Activated CD8-positive, alpha-beta T cell treated with anti-CD3 and anti-CD28 coated beads for 36 hours (primary cell): ENCODE measurements at regions of chr3 and their contacts with region 1.

Region 1: GRCh38 chr3:128845778-128846485 is 33.5 kb upstream of the ACAD9 start:
- DNase-seq: peak; percentile 94
- ATAC-seq: peak; percentile 91
- H3K4me3 Mint-ChIP-seq: peak overlapping the region; percentile 67
- H3K27ac Mint-ChIP-seq: peak overlapping the region; percentile 94
- H3K4me1 Mint-ChIP-seq: peaks cover 22% of the 10 kb centered on the region
- H3K27me3 Mint-ChIP-seq: no peaks in the 10 kb centered on the region
- CTCF ChIP-seq: peak; percentile 91

Region 2: DNA sequence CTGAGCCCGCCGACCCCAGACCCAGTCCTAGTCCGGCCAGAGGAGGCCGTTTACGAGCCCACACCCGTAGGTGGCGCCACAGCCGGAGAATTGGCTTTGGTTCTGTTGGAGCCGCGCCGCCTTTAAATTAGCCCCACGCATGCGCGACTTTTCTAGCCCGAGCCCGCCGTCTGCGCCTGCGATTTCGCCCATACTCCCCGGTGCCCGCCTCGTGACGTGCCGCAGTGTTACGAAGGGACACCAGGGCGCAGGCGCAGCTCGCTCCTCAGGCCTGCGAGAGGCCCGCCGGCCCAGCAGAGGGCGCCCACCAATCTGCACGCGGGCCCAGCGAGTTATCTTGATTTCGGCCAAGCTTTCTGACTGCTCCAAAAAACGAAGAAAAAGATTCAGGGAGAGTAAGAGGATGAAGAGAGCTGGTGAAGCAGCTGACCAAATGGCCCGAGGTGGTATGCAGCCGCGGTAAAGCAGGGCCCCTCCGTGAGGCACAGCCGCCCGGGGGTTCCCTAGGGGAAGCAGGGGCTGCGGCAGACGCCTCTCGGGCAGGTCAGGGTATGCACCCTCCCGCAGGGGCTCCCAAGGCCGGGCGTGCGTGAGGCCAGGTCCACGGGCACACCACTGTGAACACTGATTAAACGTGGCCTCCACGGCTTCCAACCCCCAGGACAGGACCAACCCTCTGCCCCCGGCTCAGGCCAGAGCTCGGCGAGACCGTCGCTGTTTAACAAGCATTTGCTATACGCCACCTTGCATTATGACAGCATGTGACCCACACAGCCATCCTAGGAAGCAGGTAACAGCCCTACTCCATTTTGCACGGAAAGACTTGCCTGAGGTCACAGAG is 228.2 kb before region 1 on chr3:
- CTCF ChIA-PET with region 1: interaction called, 16 read pairs
- POLR2A ChIA-PET with region 1: no interaction called
- intact Hi-C with region 1: no loop called
- DNase-seq: peak; percentile 99
- ATAC-seq: peak; percentile 90
- H3K4me3 Mint-ChIP-seq: peak overlapping the region; percentile 95
- H3K27ac Mint-ChIP-seq: peak overlapping the region; percentile 94
- H3K4me1 Mint-ChIP-seq: peaks cover 29% of the 10 kb centered on the region
- H3K27me3 Mint-ChIP-seq: no peaks in the 10 kb centered on the region
- CTCF ChIP-seq: peak; percentile 92

Region 3: GRCh38 chr3:128863560-128863959 is 17.6 kb after region 1 on chr3:
- CTCF ChIA-PET with region 1: interaction called, 11 read pairs
- POLR2A ChIA-PET with region 1: no interaction called
- intact Hi-C with region 1: no loop called
- DNase-seq: peak; percentile 49
- ATAC-seq: peak; percentile 61
- H3K4me3 Mint-ChIP-seq: no peak overlapping the region
- H3K27ac Mint-ChIP-seq: no peak overlapping the region
- H3K4me1 Mint-ChIP-seq: peaks cover 2% of the 10 kb centered on the region
- H3K27me3 Mint-ChIP-seq: no peaks in the 10 kb centered on the region
- CTCF ChIP-seq: peak; percentile 44

Region 4: DNA sequence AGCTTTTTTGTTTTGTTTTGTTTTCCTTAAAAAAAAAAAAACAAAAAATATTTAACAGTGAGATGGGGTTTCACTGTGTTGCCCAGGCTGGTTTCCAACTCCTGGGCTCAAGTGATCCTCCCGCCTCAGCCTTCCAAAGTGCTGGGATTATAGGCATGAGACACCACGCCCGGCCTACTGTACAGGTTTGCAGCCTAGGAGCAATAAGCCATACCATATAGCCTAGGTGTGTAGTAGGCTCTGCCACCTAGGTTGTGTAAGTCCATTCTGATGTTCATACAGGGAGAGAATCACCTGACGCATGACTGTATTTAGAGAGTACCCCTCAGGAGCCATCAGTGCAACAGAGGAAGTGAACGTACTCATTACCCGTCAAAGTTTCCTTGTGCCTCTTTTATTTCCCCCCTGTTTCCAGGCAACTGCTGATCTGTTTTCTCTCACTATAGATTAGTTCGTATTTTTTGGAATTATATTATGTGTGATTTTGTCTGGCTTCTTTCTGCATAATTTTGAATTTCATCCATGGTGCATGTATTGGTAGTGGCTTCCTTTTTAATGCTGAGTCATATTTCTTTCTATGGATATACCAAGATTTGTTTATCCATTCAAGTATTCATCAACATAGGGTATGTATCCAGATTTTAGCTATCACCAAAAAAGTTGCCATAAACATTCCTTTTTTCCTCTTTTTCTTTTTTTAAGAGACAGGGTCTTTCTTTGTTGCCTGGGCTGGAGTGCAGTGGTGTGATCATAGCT is 43.4 kb after region 1 on chr3:
- CTCF ChIA-PET with region 1: no interaction called
- POLR2A ChIA-PET with region 1: no interaction called
- intact Hi-C with region 1: no loop called
- DNase-seq: no peak
- ATAC-seq: peak; percentile 49
- H3K4me3 Mint-ChIP-seq: no peak overlapping the region
- H3K27ac Mint-ChIP-seq: peak overlapping the region; percentile 32
- H3K4me1 Mint-ChIP-seq: no peaks in the 10 kb centered on the region
- H3K27me3 Mint-ChIP-seq: no peaks in the 10 kb centered on the region
- CTCF ChIP-seq: no peak

Region 5: GRCh38 chr3:129095285-129095684 is 249.4 kb after region 1 on chr3:
- CTCF ChIA-PET with region 1: no interaction called
- POLR2A ChIA-PET with region 1: no interaction called
- intact Hi-C with region 1: no loop called
- DNase-seq: no peak
- ATAC-seq: no peak
- H3K4me3 Mint-ChIP-seq: no peak overlapping the region
- H3K27ac Mint-ChIP-seq: no peak overlapping the region
- H3K4me1 Mint-ChIP-seq: peaks cover 31% of the 10 kb centered on the region
- H3K27me3 Mint-ChIP-seq: no peaks in the 10 kb centered on the region
- CTCF ChIP-seq: no peak